Sciatic nerve (tissue), 2 donors: ENCODE measurements at regions of chr4 and their contacts with region 1.

Region 1: DNA sequence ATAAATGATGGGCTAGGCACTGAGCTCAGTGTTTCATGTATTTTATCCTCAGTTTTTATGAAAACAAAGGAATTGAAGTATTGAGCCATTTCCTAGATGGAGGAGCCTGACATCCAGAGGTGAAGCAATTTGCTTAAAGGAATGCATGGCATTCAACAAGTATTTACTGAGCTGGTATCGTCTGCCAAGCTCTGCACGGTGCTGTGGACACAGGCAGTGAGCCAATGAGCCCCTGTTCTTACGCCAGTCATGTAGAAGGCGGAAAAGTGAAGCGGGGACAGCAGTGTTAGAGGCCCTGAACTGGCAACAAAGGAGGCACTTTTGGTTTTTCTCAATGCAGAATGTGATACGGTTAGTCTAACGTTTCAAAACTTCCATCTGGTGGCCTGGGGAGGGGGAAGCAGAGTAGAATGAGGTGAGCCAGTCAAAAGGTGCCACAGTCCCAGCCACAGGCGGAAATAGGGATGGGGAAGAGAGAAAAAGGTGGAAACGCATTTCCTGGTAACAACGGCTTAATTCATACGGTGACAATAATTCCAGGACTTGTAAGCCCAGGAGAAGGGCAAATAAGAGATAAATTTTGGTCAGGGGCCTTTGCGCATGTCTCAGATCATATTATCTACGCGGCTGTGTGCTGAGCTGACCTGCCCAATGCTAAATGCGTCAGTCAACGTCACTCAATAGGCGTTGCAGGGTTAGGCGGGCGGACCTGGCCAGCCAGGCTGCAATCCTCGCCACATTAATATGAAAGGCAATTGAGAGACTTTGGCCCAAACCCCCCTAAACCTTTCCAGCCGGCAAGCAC is 133.9 kb downstream of the AFAP1 start:
- DNase-seq: no peak
- ATAC-seq: peak; percentile 70

Region 2: DNA sequence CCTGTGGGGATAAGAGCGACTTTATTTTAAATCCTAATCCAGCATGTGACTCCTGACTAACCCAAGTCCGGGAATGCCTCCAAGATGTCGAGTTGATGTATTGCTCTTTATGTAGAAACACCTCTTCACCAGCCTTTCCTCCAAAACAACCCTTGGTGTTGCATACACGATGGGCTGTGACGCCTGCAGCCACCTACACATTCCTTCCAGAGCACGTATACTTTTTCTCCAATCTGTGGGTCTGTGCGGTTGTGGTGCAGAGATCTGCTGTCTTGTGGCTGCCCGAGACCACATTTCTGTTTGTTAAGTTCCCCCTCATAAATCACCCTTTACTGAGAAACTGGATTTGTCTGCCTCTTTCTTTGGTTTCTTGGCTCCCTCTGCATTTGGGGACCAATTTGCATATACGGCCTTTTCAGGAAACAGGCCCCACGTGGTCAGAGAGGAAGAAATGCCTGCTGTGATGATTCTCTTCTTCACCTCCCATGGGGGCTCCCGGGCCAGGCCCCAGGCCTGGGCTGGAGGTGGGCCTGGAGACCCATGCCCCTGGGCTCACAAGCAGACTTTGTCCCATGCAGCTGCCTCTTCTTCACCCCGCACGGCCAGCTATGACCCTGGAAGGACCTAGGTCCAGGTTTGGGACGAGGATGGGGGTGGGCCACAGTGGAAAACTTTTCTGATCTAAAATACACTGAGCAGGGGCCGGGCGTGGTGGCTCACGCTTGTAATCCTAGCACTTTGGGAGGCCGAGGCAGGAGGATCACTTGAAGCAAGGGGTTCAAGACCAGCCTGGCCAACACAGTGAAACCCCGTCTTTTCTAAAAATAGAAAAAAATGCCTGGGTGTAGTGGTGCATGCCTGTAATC is 155.3 kb after region 1 on chr4:
- intact Hi-C with region 1: no loop called
- DNase-seq: no peak
- ATAC-seq: no peak

Region 3: DNA sequence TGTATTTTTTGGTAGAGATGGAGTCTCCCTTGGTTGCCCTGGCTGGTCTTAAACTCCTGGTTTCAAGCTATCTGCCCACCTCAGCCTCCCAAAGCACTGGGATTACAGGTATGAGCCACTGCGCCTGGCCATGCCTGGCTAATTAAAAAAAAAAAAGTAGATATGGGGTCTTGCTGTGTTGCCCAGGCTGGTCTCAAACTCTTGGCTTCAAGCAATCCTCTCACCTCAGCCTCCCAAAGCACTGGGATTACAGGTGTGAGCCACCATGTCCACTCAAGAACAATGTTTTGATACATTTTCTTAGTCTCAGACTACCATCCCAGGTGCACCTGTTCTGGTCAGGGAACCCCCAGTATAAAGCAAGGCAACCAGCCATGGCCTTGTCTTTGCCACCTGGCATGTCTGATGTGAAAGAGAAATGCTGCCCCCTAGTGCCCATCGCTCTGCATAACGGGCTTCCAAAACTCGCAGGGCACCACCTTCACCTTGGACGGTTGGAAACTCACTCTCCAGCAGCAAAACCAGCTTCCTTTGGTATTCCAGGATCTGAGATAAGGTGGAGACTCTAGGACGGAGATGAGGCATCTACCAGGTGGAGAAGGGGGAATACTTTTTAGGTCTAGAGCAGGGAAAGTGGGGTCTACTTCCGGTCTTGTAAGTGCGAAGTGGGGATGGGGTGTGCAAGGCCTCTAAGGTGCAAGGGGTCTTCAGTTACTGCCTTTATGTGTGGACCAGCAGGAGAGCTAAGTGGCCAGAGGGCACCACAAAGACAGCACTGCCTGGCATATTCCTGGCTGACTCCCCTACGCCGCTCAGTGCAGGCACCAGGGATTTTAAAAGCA is 181.6 kb after region 1 on chr4:
- intact Hi-C with region 1: loop called (anchors 5 kb)
- DNase-seq: peak; percentile 88
- ATAC-seq: peak; percentile 81